MCF 10A (cell line): ENCODE measurements at regions of chr11 and their contacts with region 1.

Region 1: DNA sequence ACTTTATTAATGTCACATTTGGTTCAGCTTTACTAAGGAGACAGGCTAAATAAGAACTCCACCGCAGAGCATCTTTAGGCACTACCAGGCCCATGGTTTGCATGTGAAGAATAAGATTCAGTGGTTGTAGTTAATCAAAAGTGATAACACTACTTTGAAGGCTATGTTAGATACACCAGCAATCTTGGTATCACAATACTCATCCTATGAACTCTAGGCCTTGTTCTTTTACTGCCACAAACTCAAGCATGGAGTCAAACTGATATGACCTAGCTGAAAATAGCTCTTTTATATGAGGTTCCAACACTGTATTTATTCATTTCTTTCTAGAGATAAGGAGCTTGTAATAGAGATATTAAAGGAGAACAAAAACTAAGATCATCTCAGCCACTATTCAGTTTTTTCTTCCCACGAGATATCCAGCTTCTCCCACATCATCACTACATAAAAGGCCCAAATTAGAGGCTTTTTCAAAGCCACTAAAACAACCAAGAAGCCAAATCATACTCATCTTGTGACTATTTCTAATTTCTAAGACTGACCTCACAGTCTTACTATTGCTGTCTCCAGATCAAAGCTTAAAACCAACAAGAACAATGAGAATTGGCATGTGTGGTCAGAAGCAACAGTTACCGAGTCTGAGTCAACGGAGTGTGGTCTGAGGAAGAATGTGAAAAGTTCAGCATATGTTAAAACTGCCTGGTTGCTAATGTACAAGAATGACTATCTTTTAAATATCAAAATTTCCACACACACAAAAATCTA is 25.1 kb upstream of the GUCY1A2 start:
- DNase-seq: peak; percentile 56
- H3K4me3 Mint-ChIP-seq: no peak overlapping the region
- H3K27ac Mint-ChIP-seq: peak overlapping the region; percentile 64
- H3K4me1 Mint-ChIP-seq: peaks cover 15% of the 10 kb centered on the region
- H3K27me3 Mint-ChIP-seq: no peaks in the 10 kb centered on the region
- CTCF ChIP-seq: no peak

Region 2: GRCh38 chr11:106231591-106231990 is 811.8 kb before region 1 on chr11:
- CTCF ChIA-PET with region 1: no interaction called
- POLR2A ChIA-PET with region 1: no interaction called
- intact Hi-C with region 1: loop called (anchors 5 kb)
- DNase-seq: peak; percentile 27
- H3K4me3 Mint-ChIP-seq: no peak overlapping the region
- H3K27ac Mint-ChIP-seq: no peak overlapping the region
- H3K4me1 Mint-ChIP-seq: no peaks in the 10 kb centered on the region
- H3K27me3 Mint-ChIP-seq: no peaks in the 10 kb centered on the region
- CTCF ChIP-seq: peak; percentile 16

Region 3: GRCh38 chr11:106306942-106307341 is 736.5 kb before region 1 on chr11:
- CTCF ChIA-PET with region 1: no interaction called
- POLR2A ChIA-PET with region 1: no interaction called
- intact Hi-C with region 1: loop called (anchors 10 kb)
- DNase-seq: peak; percentile 33
- H3K4me3 Mint-ChIP-seq: no peak overlapping the region
- H3K27ac Mint-ChIP-seq: no peak overlapping the region
- H3K4me1 Mint-ChIP-seq: no peaks in the 10 kb centered on the region
- H3K27me3 Mint-ChIP-seq: no peaks in the 10 kb centered on the region
- CTCF ChIP-seq: no peak

Region 4: DNA sequence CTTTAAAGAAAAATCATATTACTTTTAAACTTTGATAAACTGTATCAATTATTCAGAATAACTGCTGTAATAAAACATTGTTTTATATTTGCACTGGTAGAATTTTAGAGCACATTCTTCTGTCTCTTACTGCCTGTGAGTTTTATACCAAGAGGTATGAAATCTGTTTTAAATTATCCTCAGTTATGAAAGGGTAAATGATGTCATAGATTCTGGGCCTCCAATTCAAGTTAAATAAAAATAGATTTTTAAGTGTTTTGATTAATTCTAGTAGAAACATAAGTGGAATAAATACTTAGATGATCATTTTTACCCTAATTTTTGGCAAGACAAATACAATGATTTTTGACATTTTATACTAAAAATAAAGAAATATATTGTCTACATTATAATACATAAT is 118.2 kb before region 1 on chr11:
- CTCF ChIA-PET with region 1: no interaction called
- POLR2A ChIA-PET with region 1: no interaction called
- intact Hi-C with region 1: no loop called
- DNase-seq: no peak
- H3K4me3 Mint-ChIP-seq: no peak overlapping the region
- H3K27ac Mint-ChIP-seq: no peak overlapping the region
- H3K4me1 Mint-ChIP-seq: no peaks in the 10 kb centered on the region
- H3K27me3 Mint-ChIP-seq: no peaks in the 10 kb centered on the region
- CTCF ChIP-seq: no peak